ENCODE measurements at regions of chr11 and their contacts with region 1.

Region 1: DNA sequence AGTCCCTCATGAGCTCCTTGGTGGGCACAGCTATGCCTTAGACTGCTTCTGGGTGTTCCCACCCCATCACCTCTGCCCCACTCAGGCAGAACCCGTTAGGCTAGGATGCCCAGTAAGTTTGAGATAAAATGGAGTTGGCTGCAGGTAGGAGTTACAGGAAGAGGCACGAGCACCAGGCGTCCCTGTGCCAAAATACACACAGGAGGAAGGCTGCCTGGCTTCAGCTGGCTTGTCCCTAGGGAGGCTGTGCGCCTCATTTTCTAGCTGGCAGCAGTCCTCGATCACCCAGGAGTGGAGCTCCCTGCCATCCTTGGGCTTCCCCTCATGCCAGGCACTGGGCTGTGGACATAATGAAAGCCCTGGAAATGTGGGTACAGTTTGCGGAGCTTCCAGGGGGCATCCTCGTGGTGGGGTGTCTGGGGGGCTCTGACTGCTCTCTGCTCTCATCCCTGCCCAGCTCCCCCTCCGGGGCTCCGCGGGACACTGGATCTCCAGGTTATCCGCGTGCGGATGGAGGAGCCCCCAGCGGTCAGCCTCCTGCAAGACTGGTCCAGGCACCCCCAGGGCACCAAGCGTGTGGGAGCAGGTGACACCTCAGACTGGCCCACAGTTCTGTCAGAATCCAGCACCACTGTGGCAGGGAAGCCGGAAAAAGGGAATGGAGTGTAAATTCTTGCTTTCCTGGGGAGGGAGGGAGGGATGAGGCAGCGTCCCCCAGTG is 12.3 kb upstream of the MARK2 start:
- DNase-seq: no peak
- H3K4me3 Mint-ChIP-seq: no peak overlapping the region
- H3K27ac Mint-ChIP-seq: no peak overlapping the region
- H3K4me1 Mint-ChIP-seq: peaks cover 3% of the 10 kb centered on the region
- H3K27me3 Mint-ChIP-seq: no peaks in the 10 kb centered on the region

Region 2: DNA sequence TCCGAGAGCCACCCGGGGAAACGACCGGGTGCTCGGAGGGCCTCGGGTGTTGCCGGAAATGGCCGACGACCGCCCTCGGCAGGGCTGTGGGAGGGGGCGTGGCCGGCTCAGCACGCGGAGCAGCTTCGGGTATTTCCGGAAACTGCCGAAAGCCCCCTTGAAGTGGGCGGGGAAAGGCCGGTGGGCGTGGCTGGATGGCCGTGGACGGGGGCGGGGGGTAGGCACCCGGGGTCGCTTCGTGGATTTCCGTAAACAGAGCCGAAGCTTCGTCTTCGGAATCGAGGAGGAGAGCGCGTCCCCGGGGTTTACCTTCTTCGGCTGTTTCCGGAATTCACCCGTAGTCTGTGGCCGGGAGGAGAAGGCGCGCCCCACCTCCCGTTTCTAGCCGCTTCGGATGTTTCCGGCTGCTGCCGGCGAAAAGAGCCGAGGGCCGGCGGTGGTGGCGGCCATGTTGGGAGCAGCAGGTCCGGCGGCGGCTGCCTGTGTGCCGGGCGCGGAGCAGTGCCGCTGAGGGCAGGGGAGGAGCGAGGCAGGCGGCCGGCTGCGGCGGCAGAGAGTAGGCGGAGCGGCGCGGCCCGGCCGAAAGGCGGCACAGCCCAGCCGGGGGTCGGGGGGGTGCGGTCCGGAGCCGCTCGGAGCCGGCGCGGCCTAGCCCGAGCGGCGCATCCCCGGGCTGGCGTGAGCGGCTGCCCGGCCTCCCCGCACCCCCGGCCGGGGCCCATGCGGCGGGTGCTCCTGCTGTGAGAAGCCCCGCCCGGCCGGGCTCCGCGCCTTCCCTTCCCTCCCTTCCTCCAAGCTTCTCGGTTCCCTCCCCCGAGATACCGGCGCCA is 12.3 kb after region 1 on chr11 and contains the start of gene MARK2:
- CTCF ChIA-PET with region 1: interaction called, 10 read pairs
- POLR2A ChIA-PET with region 1: no interaction called
- DNase-seq: peak; percentile 99
- H3K4me3 Mint-ChIP-seq: peak within 1 kb of the TSS; percentile 82
- H3K27ac Mint-ChIP-seq: peak within 1 kb of the TSS; percentile 92
- H3K4me1 Mint-ChIP-seq: peaks cover 57% of the 10 kb centered on the region
- H3K27me3 Mint-ChIP-seq: no peaks in the 10 kb centered on the region
- total RNA-seq, gene MARK2: 68.3 to 69.2 TPM

Region 3: DNA sequence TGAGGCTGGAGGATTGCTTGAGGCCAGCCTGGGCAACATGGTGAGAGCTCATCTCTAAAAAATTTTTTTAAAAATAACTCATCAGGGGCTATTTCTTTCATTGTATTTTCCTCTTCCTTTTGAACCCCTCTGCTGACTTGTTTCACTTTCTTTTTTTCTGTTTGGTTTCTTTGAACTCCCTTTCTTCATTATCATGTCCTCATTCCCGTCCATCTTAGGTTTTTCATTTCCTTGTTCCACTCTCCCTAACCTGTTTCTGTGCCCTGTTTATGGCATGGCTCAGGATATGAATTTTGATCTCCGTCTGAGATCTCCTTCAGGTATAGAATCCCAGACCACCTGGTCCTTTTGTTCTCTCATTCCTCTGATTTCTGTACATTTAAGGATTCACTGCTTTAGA is 24.7 kb after region 1 on chr11:
- CTCF ChIA-PET with region 1: no interaction called
- POLR2A ChIA-PET with region 1: no interaction called
- DNase-seq: no peak
- H3K4me3 Mint-ChIP-seq: peak overlapping the region; percentile 71
- H3K27ac Mint-ChIP-seq: peak overlapping the region; percentile 88
- H3K4me1 Mint-ChIP-seq: peaks cover 67% of the 10 kb centered on the region
- H3K27me3 Mint-ChIP-seq: no peaks in the 10 kb centered on the region

Measured in activated CD4-positive, alpha-beta T cell treated with anti-CD3 and anti-CD28 coated beads, Interleukin-2, amount 10 ng/mL, durations not matched to agents 7 days and 5 days (primary cell).